ENCODE measurements at regions of chr6 and their contacts with region 1.

Region 1: GRCh38 chr6:135535989-135536414 is 38.5 kb upstream of the AHI1 start:
- DNase-seq: no peak
- ATAC-seq: peak; percentile 48
- H3K4me3 Mint-ChIP-seq: no peak overlapping the region
- H3K27ac Mint-ChIP-seq: peak overlapping the region; percentile 73
- H3K4me1 Mint-ChIP-seq: peaks cover 45% of the 10 kb centered on the region
- H3K27me3 Mint-ChIP-seq: no peaks in the 10 kb centered on the region

Region 2: GRCh38 chr6:135555550-135555949 is 19.5 kb after region 1 on chr6:
- CTCF ChIA-PET with region 1: interaction called, 17 read pairs
- DNase-seq: no peak
- ATAC-seq: no peak
- H3K4me3 Mint-ChIP-seq: no peak overlapping the region
- H3K27ac Mint-ChIP-seq: no peak overlapping the region
- H3K4me1 Mint-ChIP-seq: peaks cover 5% of the 10 kb centered on the region
- H3K27me3 Mint-ChIP-seq: peaks cover 28% of the 10 kb centered on the region

Region 3: GRCh38 chr6:135624402-135625295 is 88.6 kb after region 1 on chr6:
- CTCF ChIA-PET with region 1: interaction called, 16 read pairs
- DNase-seq: peak; percentile 46
- ATAC-seq: peak; percentile 87
- H3K4me3 Mint-ChIP-seq: no peak overlapping the region
- H3K27ac Mint-ChIP-seq: peak overlapping the region; percentile 88
- H3K4me1 Mint-ChIP-seq: peaks cover 34% of the 10 kb centered on the region
- H3K27me3 Mint-ChIP-seq: no peaks in the 10 kb centered on the region

Region 4: DNA sequence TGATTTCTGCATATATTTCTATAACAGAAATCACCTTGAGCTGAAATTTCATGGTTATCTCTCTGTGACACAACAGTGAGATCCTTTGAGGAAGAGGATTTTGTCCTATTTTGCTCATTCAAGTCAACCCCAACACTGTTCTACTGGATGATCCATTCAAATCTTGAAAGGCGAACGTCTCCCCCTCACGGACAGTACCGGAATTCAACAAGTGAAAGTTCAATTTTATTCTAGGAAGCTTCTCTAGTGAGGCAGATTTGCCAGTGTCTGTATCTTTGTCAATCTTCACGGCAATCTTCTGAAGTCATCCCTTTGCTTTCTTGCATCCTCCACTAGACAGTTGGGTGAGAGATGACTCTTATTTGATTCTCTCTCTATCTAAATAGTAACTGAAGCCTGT is 223.8 kb after region 1 on chr6:
- CTCF ChIA-PET with region 1: interaction called, 18 read pairs
- DNase-seq: no peak
- ATAC-seq: no peak
- H3K4me3 Mint-ChIP-seq: no peak overlapping the region
- H3K27ac Mint-ChIP-seq: no peak overlapping the region
- H3K4me1 Mint-ChIP-seq: no peaks in the 10 kb centered on the region
- H3K27me3 Mint-ChIP-seq: peaks cover 2% of the 10 kb centered on the region

Region 5: GRCh38 chr6:135851442-135852271 is 315.7 kb after region 1 on chr6 and contains the start of gene PDE7B:
- CTCF ChIA-PET with region 1: no interaction called
- DNase-seq: peak; percentile 73
- ATAC-seq: peak; percentile 95
- H3K4me3 Mint-ChIP-seq: peak within 1 kb of the TSS; percentile 55
- H3K27ac Mint-ChIP-seq: peak within 1 kb of the TSS; percentile 66
- H3K4me1 Mint-ChIP-seq: peaks cover 7% of the 10 kb centered on the region
- H3K27me3 Mint-ChIP-seq: peaks cover 3% of the 10 kb centered on the region
- total RNA-seq, gene PDE7B: 0.38 to 3.5 TPM

Region 6: GRCh38 chr6:135909737-135910387 is 373.9 kb after region 1 on chr6:
- CTCF ChIA-PET with region 1: interaction called, 35 read pairs
- DNase-seq: peak; percentile 73
- ATAC-seq: peak; percentile 88
- H3K4me3 Mint-ChIP-seq: no peak overlapping the region
- H3K27ac Mint-ChIP-seq: no peak overlapping the region
- H3K4me1 Mint-ChIP-seq: peaks cover 5% of the 10 kb centered on the region
- H3K27me3 Mint-ChIP-seq: no peaks in the 10 kb centered on the region

Measured in activated CD8-positive, alpha-beta memory T cell treated with anti-CD3 and anti-CD28 coated beads, Interleukin-2, amount 10 ng/mL, durations not matched to agents 7 days and 5 days (primary cell).